ENCODE measurements at regions of chr1 and their contacts with region 1.

Region 1: GRCh38 chr1:67832737-67833601 is at the start of gene GNG12:
- DNase-seq: peak; percentile 18
- H3K4me3 Mint-ChIP-seq: peak within 1 kb of the TSS; percentile 72
- H3K27ac Mint-ChIP-seq: no peak within 1 kb of the TSS
- H3K4me1 Mint-ChIP-seq: peaks cover 10% of the 10 kb centered on the region
- H3K27me3 Mint-ChIP-seq: peaks cover 60% of the 10 kb centered on the region
- total RNA-seq, gene GNG12: 0.16 and 0.25 TPM in 2 replicates

Region 2: DNA sequence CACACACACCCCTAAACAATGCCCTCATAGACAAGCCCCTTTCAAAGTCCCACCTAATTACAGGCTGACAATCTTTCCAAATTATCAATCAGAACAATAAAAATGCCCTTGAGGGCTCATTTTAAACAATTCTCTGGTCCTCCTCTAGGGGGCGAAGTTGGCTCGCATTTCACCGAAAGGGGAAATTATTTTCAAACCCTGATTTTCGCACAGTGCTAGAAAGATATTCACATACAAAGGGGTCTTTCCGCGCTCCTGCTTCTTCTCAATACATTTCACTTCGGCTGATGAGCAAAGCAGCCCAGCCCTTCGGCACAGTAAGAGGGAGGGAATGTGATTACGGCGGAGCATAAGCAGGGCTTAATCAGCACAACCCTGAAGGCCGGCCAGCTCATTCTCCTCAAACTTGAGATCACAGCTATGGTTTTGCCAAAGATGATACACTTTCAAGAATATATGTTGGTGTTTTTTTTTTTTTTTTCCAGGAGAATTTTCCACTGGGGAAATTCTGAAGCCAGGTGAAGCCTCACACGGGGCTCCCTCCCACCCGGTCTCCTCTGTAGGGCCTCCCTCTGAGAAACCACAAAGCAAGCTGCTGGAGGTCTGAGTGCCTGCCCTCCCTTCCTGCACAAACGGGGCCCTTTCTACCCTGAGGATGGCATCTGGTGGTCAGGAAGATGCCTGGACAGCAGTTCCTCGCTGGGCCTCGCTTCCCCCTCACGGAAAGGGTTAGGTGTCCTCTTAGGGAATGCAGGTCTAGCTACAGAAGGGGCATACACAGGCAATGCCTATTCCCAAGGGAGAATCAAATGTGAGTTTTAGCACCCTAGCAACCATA is 66.6 kb before region 1 on chr1:
- intact Hi-C with region 1: loop called (anchors 5 kb)
- DNase-seq: no peak
- H3K4me3 Mint-ChIP-seq: no peak overlapping the region
- H3K27ac Mint-ChIP-seq: no peak overlapping the region
- H3K4me1 Mint-ChIP-seq: peaks cover 25% of the 10 kb centered on the region
- H3K27me3 Mint-ChIP-seq: peaks cover 26% of the 10 kb centered on the region

Region 3: DNA sequence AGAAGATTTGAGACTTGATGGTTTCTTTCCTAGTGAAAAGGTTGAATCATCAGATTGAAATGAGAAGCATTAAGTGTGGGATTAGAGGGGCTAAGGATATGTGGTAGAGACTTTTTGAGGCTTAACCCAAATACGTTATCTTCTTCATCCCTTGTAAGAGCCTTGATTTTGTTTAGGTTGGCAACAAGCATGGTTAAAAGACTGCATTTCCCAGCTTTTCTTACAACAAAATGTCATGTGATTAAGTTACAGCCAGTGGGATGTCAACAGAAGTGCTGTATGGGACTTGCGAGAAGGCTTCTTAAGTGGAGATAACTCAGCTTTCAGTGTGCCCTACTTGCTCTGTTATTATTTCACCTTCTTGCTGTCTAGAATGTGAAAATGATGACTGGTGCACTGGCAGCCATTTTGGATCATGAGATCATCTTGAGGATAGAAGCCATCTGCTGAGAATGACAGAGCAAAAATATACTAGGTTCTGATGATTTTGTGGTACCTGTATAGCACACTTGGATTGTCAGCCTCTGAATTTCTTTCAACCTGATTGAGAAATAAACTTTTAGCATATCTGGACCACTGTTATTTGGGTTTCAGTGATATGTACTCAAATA is 41.6 kb after region 1 on chr1:
- intact Hi-C with region 1: no loop called
- DNase-seq: no peak
- H3K4me3 Mint-ChIP-seq: no peak overlapping the region
- H3K27ac Mint-ChIP-seq: no peak overlapping the region
- H3K4me1 Mint-ChIP-seq: no peaks in the 10 kb centered on the region
- H3K27me3 Mint-ChIP-seq: peaks cover 6% of the 10 kb centered on the region

Region 4: GRCh38 chr1:68051475-68051874 is 218.5 kb after region 1 on chr1:
- intact Hi-C with region 1: loop called (anchors 5 kb)
- DNase-seq: no peak
- H3K4me3 Mint-ChIP-seq: no peak overlapping the region
- H3K27ac Mint-ChIP-seq: no peak overlapping the region
- H3K4me1 Mint-ChIP-seq: peaks cover 5% of the 10 kb centered on the region
- H3K27me3 Mint-ChIP-seq: peaks cover 31% of the 10 kb centered on the region

Region 5: GRCh38 chr1:68232354-68233148 is 399.6 kb after region 1 on chr1 and contains the start of gene WLS:
- intact Hi-C with region 1: loop called (anchors 5 kb)
- DNase-seq: no peak
- H3K4me3 Mint-ChIP-seq: no peak within 1 kb of the TSS
- H3K27ac Mint-ChIP-seq: no peak within 1 kb of the TSS
- H3K4me1 Mint-ChIP-seq: peaks cover 3% of the 10 kb centered on the region
- H3K27me3 Mint-ChIP-seq: peaks cover 47% of the 10 kb centered on the region
- total RNA-seq, gene WLS: not detected in 2 replicates

Measured in activated T-helper 2 cell treated with anti-CD3 and anti-CD28 coated beads, Interferon-gamma antibody, Interleukin-2, Interleukin-4, amounts not matched to agents 10 μg/mL and 5 μg/mL and 100 μg/mL, durations not matched to agents 14 hours and 24 hours and 36 hours (primary cell).